Activated CD4-positive, alpha-beta T cell treated with anti-CD3 and anti-CD28 coated beads for 36 hours (primary cell): ENCODE measurements at regions of chr14 and their contacts with region 1.

Region 1: DNA sequence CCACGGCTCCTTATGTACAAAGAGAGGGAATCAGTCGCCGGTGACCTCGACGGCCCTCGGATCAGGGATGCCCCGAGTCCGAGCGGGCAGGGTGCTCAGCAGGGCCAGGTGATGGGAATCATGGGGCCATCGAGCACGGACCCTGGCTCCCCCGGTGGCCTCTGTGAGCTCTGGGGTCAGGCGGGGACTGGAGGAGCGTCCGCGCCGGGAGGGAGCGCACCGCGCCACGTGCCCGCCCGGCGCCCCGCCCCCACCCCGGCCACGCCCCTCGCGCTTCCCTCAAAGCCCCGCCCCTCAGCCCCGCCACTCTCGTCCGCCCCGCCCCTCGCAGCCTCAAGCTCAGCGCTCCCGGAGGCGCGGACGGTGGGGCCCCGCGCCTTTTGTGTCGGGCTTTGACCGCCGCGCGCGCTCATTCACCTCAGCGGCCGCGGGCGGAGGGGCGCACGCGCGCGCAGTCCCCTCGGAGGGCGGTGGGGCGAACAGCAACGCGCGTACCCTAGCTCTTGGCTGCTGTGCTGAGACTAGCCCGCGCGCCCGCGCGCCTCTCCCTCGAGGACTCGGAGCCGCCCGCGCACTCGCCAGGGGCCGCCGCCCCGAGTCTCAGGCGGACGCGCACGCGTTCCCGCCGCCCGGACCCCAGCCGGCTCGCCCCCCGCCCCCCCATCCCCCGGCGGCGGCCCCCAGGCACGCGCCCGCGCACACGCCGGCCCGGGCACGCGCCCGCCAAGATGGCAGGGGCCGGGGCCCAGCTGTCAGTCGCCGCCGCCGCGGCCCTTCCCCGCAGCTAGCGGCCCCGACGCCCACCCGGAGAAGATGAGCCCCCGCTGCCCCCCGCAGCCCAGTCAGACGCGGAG is 93.9 kb upstream of the EVL start:
- DNase-seq: peak; percentile 93
- ATAC-seq: peak; percentile 87
- H3K4me3 Mint-ChIP-seq: peak overlapping the region; percentile 98
- H3K27ac Mint-ChIP-seq: no peak overlapping the region
- H3K4me1 Mint-ChIP-seq: peaks cover 21% of the 10 kb centered on the region
- H3K27me3 Mint-ChIP-seq: peaks cover 21% of the 10 kb centered on the region

Region 2: GRCh38 chr14:99055816-99056215 is 915.5 kb before region 1 on chr14:
- CTCF ChIA-PET with region 1: no interaction called
- POLR2A ChIA-PET with region 1: no interaction called
- intact Hi-C with region 1: no loop called
- DNase-seq: peak; percentile 44
- ATAC-seq: peak; percentile 85
- H3K4me3 Mint-ChIP-seq: no peak overlapping the region
- H3K27ac Mint-ChIP-seq: no peak overlapping the region
- H3K4me1 Mint-ChIP-seq: peaks cover 9% of the 10 kb centered on the region
- H3K27me3 Mint-ChIP-seq: no peaks in the 10 kb centered on the region

Region 3: DNA sequence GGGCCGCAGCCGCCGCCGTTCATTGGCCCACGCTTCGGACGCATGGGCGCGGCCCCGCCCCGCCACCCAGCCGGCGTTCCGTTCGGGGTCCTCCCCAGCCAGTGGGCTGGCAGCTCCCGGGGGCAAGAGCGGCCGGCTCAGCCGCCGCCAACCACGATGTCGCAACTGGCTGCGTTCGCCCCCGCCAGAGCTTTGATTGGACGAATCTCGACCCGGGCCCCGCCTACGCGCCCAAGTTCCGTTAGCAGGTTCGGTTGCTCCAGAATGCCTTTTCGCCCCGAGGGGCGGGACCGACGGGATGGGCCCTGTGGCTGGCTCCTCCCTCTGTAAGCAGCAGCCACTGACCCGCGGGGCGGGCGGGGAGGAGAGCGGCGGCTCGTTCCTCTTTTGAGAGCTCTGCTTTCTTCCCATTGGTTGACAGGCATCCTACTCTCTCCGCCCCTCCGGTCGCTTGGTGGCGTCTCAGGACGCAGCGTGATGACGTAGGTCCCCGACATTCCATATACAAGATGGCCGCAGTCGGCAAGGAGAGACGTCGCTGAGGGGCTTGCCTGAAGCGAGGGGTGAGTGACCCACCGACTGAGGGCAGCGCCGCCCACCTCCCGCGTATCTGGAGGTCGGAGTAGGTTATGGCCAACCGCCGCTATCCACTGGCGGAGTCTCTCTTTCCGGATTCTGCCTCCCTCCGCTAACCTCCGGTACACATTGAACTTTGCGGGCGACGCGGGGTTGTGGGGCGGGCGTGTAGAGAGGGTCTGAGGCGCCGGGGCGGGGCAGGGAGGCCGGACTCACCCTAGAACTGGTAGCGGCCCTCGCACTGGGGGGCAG is 490.2 kb before region 1 on chr14 and contains the start of gene CCNK:
- CTCF ChIA-PET with region 1: no interaction called
- POLR2A ChIA-PET with region 1: no interaction called
- intact Hi-C with region 1: loop called in 1 of 2 experiments (anchors 2 kb)
- DNase-seq: peak; percentile 100
- ATAC-seq: peak; percentile 95
- H3K4me3 Mint-ChIP-seq: peak within 1 kb of the TSS; percentile 97
- H3K27ac Mint-ChIP-seq: peak within 1 kb of the TSS; percentile 96
- H3K4me1 Mint-ChIP-seq: peaks cover 58% of the 10 kb centered on the region
- H3K27me3 Mint-ChIP-seq: no peaks in the 10 kb centered on the region
- total RNA-seq, gene CCNK: 93.7 to 96.2 TPM

Region 4: DNA sequence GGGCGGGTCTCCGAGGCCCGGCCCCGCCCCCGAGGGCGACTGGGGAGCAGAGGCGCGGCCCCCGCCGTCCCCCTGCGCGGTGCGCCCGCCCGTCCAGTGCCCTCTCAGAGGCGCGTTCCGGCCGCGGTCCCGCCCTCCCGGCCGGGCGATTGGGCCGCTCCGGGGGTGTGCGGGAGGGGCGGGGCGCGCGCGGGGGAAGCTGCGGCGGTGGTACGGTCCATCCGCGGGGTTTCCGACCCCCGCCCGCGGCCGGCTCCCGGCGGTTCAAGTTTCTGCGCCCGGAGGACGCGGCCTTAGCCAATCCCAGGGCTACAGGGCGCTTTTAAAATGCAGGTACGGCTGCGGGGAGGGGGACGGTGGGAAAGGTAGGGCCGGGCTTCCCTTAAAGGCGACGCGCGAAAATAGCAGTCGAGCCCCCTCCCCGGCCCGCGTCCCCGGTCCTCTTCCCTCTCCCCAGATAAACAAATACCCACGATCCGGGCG is 367.0 kb before region 1 on chr14:
- CTCF ChIA-PET with region 1: interaction called, 3 read pairs
- POLR2A ChIA-PET with region 1: no interaction called
- intact Hi-C with region 1: loop called in 1 of 2 experiments (anchors 1 kb)
- DNase-seq: peak; percentile 96
- ATAC-seq: peak; percentile 94
- H3K4me3 Mint-ChIP-seq: peak overlapping the region; percentile 72
- H3K27ac Mint-ChIP-seq: peak overlapping the region; percentile 72
- H3K4me1 Mint-ChIP-seq: peaks cover 28% of the 10 kb centered on the region
- H3K27me3 Mint-ChIP-seq: peaks cover 2% of the 10 kb centered on the region

Region 5: GRCh38 chr14:100155042-100155846 is 183.9 kb after region 1 on chr14:
- CTCF ChIA-PET with region 1: interaction called, 3 read pairs
- POLR2A ChIA-PET with region 1: no interaction called
- intact Hi-C with region 1: loop called in 1 of 2 experiments (anchors 1 kb)
- DNase-seq: peak; percentile 75
- ATAC-seq: no peak
- H3K4me3 Mint-ChIP-seq: no peak overlapping the region
- H3K27ac Mint-ChIP-seq: no peak overlapping the region
- H3K4me1 Mint-ChIP-seq: peaks cover 6% of the 10 kb centered on the region
- H3K27me3 Mint-ChIP-seq: peaks cover 15% of the 10 kb centered on the region

Region 6: GRCh38 chr14:100213956-100214774 is 242.9 kb after region 1 on chr14:
- CTCF ChIA-PET with region 1: no interaction called
- POLR2A ChIA-PET with region 1: interaction called, 3 read pairs
- intact Hi-C with region 1: loop called in 1 of 2 experiments (anchors 1 kb)
- DNase-seq: peak; percentile 97
- ATAC-seq: peak; percentile 96
- H3K4me3 Mint-ChIP-seq: peak overlapping the region; percentile 79
- H3K27ac Mint-ChIP-seq: peak overlapping the region; percentile 87
- H3K4me1 Mint-ChIP-seq: peaks cover 23% of the 10 kb centered on the region
- H3K27me3 Mint-ChIP-seq: no peaks in the 10 kb centered on the region

Region 7: GRCh38 chr14:100306420-100307219 is 335.3 kb after region 1 on chr14 and contains the start of gene SLC25A29:
- CTCF ChIA-PET with region 1: no interaction called
- POLR2A ChIA-PET with region 1: interaction called, 3 read pairs
- intact Hi-C with region 1: loop called in 1 of 2 experiments (anchors 1 kb)
- DNase-seq: peak; percentile 80
- ATAC-seq: peak; percentile 90
- H3K4me3 Mint-ChIP-seq: peak within 1 kb of the TSS; percentile 63
- H3K27ac Mint-ChIP-seq: no peak within 1 kb of the TSS
- H3K4me1 Mint-ChIP-seq: peaks cover 7% of the 10 kb centered on the region
- H3K27me3 Mint-ChIP-seq: peaks cover 14% of the 10 kb centered on the region
- total RNA-seq, gene SLC25A29: 5.4 to 5.8 TPM

Region 8: DNA sequence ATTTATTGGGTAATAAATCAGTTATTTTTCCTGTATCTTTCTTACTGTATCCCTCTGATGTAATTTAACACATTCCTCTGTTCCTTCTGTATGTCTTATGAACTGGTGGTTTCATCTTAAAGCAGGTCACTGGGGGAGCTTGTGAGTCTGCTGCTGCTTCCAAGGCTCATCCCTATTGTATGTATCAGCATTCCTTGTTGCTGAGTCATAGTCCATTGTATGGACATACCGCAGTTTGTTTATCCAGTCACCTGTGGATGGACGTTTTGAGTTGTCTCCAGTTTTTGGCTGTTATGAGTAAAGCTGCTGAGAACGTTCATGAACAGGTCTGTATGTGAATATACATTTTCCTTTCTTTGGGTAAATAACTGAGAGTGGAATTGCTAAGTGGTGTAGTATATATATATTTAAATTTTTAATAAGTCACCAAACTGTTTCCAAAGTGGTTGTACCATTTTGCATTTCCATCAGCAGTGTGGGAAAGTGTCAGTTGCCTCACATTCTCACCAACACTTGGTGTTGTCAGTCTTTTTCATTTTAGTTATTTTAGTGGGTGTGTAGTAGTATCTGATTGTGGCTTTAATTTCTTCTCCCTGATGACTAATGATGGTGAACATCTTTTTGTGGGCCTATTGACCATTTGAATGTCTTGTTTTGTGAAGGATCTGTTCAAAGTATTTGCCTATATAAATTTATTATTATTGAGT is 533.2 kb after region 1 on chr14:
- CTCF ChIA-PET with region 1: no interaction called
- POLR2A ChIA-PET with region 1: no interaction called
- intact Hi-C with region 1: no loop called
- DNase-seq: no peak
- ATAC-seq: no peak
- H3K4me3 Mint-ChIP-seq: no peak overlapping the region
- H3K27ac Mint-ChIP-seq: no peak overlapping the region
- H3K4me1 Mint-ChIP-seq: peaks cover 5% of the 10 kb centered on the region
- H3K27me3 Mint-ChIP-seq: no peaks in the 10 kb centered on the region